H1 (cell line): ENCODE measurements at regions of chr12 and their contacts with region 1.

Region 1: GRCh38 chr12:121110211-121110940 is 22.3 kb upstream of the P2RX7 start:
- DNase-seq: peak in 1 of 2 experiments; percentile 68
- H3K4me3 ChIP-seq: no peak overlapping the region
- H3K27ac ChIP-seq: no peak overlapping the region
- H3K4me1 ChIP-seq: no peaks in the 10 kb centered on the region
- H3K27me3 ChIP-seq: no peaks in the 10 kb centered on the region
- CTCF ChIP-seq: peak; percentile 63 to 97 (median 90)
- EP300 ChIP-seq: no peak
- POLR2A ChIP-seq: no peak
- RAD21 ChIP-seq: peak; percentile 94 to 96

Region 2: GRCh38 chr12:121095544-121096198 is 14.7 kb before region 1 on chr12:
- CTCF ChIA-PET with region 1: interaction called, 16 read pairs
- POLR2A ChIA-PET with region 1: no interaction called
- DNase-seq: peak in 1 of 2 experiments; percentile 91
- H3K4me3 ChIP-seq: peak overlapping the region; percentile 9 to 49 (median 26); a peak in 5 of 8 replicates
- H3K27ac ChIP-seq: no peak overlapping the region
- H3K4me1 ChIP-seq: peaks cover 0 to 3% (median under 1%) of the 10 kb centered on the region in 4 experiments; a peak in 1 of 7 replicates
- H3K27me3 ChIP-seq: peaks cover 0 to 7% (median 5%) of the 10 kb centered on the region in 4 experiments; a peak in 6 of 7 replicates
- CTCF ChIP-seq: peak; percentile 81 to 88 (median 83)
- EP300 ChIP-seq: no peak
- POLR2A ChIP-seq: no peak
- RAD21 ChIP-seq: peak; percentile 70 to 80